Lower leg skin (tissue), 4 donors: ENCODE measurements at regions of chr1 and their contacts with region 1.

Region 1: DNA sequence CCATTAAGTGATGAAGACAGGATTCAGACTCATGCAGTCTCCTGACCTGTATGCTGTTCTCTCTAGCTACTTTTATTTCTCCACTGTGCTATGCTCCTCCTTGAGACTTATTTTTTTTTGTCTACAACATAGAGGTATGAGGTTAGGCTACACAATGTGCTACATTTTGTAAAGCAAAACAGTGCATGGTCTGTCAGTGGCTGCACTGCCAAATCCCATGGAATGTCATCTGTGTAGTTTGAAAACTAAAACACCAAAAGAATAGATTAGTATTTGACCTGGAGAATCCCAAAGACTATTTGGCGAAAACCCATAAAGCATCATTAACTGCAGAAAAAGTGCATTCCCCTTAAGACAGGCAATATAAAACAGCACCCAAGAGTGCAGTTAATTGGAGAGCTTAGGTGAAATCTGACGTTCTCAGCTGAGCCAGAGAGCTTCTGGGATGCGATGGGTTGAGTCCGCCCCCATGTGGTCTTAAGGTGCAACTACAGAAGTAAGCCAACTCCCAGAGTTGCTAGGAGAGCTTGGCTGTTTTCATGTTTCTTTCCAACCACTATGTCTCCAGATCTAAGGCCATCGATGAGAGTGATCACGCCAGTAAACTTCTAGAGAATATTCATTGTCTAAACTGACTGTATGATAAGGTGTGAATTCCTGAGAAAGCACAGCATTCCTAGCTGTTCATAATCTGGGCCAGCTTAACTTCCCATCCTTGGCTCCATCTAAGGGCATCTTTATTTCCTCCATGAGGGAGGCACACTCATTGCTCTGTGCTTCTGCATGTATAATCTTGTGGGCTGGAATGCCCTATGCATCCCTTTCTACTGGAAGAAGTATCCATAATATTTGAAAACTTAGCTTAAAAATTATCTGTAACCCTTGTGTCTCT is 20.7 kb upstream of the CYP2J2 start:
- DNase-seq: peak in 1 of 2 donors; percentile 42
- H3K4me3 ChIP-seq: no peak overlapping the region
- CTCF ChIP-seq: peak in 1 of 3 donors; percentile 54
- POLR2A ChIP-seq: no peak

Region 2: DNA sequence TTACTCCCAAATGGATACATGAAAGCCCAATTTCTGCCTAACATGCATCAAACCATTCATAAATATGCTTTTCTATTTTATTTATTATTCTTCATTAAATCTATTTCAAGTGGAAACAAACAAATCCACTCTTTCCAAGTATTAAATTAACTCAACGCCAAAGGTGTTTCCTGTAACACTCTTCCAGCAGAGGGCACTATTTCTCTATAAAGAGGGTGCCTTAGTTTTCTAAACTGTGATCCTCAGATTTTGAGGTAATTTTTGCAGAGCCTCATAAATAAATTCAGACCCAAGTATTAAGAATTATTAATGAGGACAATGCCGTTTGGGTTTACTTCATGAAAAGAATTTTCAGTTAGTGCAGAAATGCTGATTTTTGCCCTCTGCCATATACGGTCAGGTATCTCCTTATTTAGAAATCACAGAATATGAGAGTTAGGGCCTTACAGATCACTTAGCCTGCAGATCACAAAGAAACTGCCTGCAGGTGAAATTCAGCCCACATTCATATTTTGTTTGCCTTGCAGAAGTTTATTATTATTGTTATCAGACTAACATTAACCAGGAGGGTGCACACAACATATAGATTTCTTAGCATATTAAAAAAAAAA is 1207.3 kb before region 1 on chr1:
- intact Hi-C with region 1: loop called (anchors 10 kb)
- DNase-seq: no peak
- H3K4me3 ChIP-seq: no peak overlapping the region
- CTCF ChIP-seq: peak in 1 of 3 donors; percentile 39
- POLR2A ChIP-seq: no peak

Region 3: GRCh38 chr1:59892841-59893811 is 54.2 kb before region 1 on chr1:
- intact Hi-C with region 1: loop called (anchors 10 kb)
- DNase-seq: no peak
- H3K4me3 ChIP-seq: no peak overlapping the region
- CTCF ChIP-seq: no peak
- POLR2A ChIP-seq: no peak